ENCODE measurements at regions of chr21 and their contacts with region 1.

Region 1: GRCh38 chr21:14977814-14978213 is 87.0 kb downstream of the NRIP1 start:
- DNase-seq: no peak
- ATAC-seq: no peak
- H3K4me3 ChIP-seq: no peak overlapping the region
- H3K4me3 Mint-ChIP-seq: no peak overlapping the region
- H3K27ac ChIP-seq: no peak overlapping the region
- H3K27ac Mint-ChIP-seq: no peak overlapping the region
- H3K4me1 ChIP-seq: no peaks in the 10 kb centered on the region
- H3K4me1 Mint-ChIP-seq: peaks cover 0 to 35% (median 8%) of the 10 kb centered on the region in 7 donors
- H3K27me3 ChIP-seq: no peaks in the 10 kb centered on the region
- H3K27me3 Mint-ChIP-seq: no peaks in the 10 kb centered on the region

Region 2: GRCh38 chr21:14545906-14546480 is 431.8 kb before region 1 on chr21 and contains the start of gene SAMSN1:
- CTCF ChIA-PET with region 1: no interaction called
- POLR2A ChIA-PET with region 1: no interaction called
- intact Hi-C with region 1: no loop called
- DNase-seq: peak in 8 of 9 donors; percentile 62 to 84 (median 78)
- ATAC-seq: peak; percentile 93
- H3K4me3 ChIP-seq: peak within 1 kb of the TSS; percentile 78
- H3K4me3 Mint-ChIP-seq: peak within 1 kb of the TSS; percentile 81 to 99 (median 93)
- H3K27ac ChIP-seq: peak within 1 kb of the TSS; percentile 82
- H3K27ac Mint-ChIP-seq: peak within 1 kb of the TSS; percentile 81 to 97 (median 93)
- H3K4me1 ChIP-seq: peaks cover 43 to 50% of the 10 kb centered on the region in 2 donors
- H3K4me1 Mint-ChIP-seq: peaks cover 31 to 79% (median 67%) of the 10 kb centered on the region in 7 donors
- H3K27me3 ChIP-seq: no peaks in the 10 kb centered on the region
- H3K27me3 Mint-ChIP-seq: no peaks in the 10 kb centered on the region
- total RNA-seq, gene SAMSN1: 27.5 to 136 (median 38.0) TPM

Region 3: GRCh38 chr21:14991957-14992356 is 14.1 kb after region 1 on chr21:
- CTCF ChIA-PET with region 1: no interaction called
- POLR2A ChIA-PET with region 1: interaction called, 3 read pairs
- intact Hi-C with region 1: loop called in 1 of 2 experiments (anchors 2 kb)
- DNase-seq: no peak
- ATAC-seq: no peak
- H3K4me3 ChIP-seq: no peak overlapping the region
- H3K4me3 Mint-ChIP-seq: no peak overlapping the region
- H3K27ac ChIP-seq: no peak overlapping the region
- H3K27ac Mint-ChIP-seq: peak overlapping the region in 2 of 9 donors; percentile 18 to 24
- H3K4me1 ChIP-seq: no peaks in the 10 kb centered on the region
- H3K4me1 Mint-ChIP-seq: peaks cover 8 to 47% (median 36%) of the 10 kb centered on the region in 7 donors
- H3K27me3 ChIP-seq: no peaks in the 10 kb centered on the region
- H3K27me3 Mint-ChIP-seq: no peaks in the 10 kb centered on the region